Vagina (tissue), 2 donors: ENCODE measurements at regions of chr10 and their contacts with region 1.

Region 1: GRCh38 chr10:11611248-11612020 is at the start of gene USP6NL:
- DNase-seq: no peak
- H3K4me3 ChIP-seq: peak within 1 kb of the TSS; percentile 91 to 93
- H3K27ac ChIP-seq: peak within 1 kb of the TSS; percentile 88
- H3K4me1 ChIP-seq: peaks cover 28% of the 10 kb centered on the region
- H3K27me3 ChIP-seq: no peaks in the 10 kb centered on the region
- CTCF ChIP-seq: no peak
- POLR2A ChIP-seq: peak in 1 of 2 donors; percentile 39
- total RNA-seq, gene USP6NL: 23.3 TPM

Region 2: GRCh38 chr10:11335167-11335652 is 276.2 kb before region 1 on chr10:
- intact Hi-C with region 1: no loop called
- DNase-seq: no peak
- H3K4me3 ChIP-seq: no peak overlapping the region
- H3K27ac ChIP-seq: no peak overlapping the region
- H3K4me1 ChIP-seq: peaks cover 7% of the 10 kb centered on the region
- H3K27me3 ChIP-seq: no peaks in the 10 kb centered on the region
- CTCF ChIP-seq: no peak
- POLR2A ChIP-seq: no peak

Region 3: DNA sequence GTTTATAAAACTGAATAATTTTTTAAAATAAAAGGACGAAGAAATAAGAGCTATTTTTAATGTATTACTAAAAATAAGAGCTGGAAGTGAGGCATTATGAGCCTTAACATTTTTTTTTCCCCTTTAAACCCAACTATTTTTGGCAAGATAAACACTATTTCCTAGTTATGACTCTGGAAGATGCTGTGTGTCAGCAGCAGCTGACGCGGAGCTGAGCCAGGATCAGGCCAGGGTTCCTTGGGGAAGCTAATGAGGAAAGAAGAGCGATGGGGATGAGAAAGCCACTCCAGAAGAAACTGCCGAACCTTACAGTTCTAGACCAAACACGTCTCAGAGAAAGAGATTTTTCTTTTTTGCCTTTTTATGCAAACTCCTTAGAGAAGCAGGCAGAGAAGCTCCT is 85.9 kb before region 1 on chr10:
- intact Hi-C with region 1: loop called (anchors 10 kb)
- DNase-seq: no peak
- H3K4me3 ChIP-seq: no peak overlapping the region
- H3K27ac ChIP-seq: no peak overlapping the region
- H3K4me1 ChIP-seq: peaks cover 12% of the 10 kb centered on the region
- H3K27me3 ChIP-seq: no peaks in the 10 kb centered on the region
- CTCF ChIP-seq: no peak
- POLR2A ChIP-seq: no peak

Region 4: DNA sequence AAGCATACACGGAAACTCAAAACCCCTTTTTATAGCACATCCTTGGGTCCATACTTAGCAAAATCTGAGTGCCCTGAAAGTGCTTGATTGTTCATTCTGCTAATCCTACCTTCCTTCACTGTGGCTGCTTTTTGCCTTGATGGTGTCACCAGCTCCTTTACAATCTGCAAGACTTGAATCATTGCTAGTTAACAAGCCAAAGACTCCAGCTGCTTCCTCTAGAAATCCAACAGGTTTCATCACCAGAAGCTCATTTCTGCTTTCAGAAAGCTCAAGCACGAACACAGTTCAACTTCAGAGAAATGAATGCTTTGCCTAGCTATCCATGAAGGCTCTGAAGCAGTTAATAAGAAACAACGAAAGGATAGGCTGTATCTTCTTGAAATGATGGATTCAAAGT is 37.9 kb before region 1 on chr10:
- intact Hi-C with region 1: no loop called
- DNase-seq: no peak
- H3K4me3 ChIP-seq: no peak overlapping the region
- H3K27ac ChIP-seq: no peak overlapping the region
- H3K4me1 ChIP-seq: peaks cover 11% of the 10 kb centered on the region
- H3K27me3 ChIP-seq: no peaks in the 10 kb centered on the region
- CTCF ChIP-seq: no peak
- POLR2A ChIP-seq: no peak

Region 5: DNA sequence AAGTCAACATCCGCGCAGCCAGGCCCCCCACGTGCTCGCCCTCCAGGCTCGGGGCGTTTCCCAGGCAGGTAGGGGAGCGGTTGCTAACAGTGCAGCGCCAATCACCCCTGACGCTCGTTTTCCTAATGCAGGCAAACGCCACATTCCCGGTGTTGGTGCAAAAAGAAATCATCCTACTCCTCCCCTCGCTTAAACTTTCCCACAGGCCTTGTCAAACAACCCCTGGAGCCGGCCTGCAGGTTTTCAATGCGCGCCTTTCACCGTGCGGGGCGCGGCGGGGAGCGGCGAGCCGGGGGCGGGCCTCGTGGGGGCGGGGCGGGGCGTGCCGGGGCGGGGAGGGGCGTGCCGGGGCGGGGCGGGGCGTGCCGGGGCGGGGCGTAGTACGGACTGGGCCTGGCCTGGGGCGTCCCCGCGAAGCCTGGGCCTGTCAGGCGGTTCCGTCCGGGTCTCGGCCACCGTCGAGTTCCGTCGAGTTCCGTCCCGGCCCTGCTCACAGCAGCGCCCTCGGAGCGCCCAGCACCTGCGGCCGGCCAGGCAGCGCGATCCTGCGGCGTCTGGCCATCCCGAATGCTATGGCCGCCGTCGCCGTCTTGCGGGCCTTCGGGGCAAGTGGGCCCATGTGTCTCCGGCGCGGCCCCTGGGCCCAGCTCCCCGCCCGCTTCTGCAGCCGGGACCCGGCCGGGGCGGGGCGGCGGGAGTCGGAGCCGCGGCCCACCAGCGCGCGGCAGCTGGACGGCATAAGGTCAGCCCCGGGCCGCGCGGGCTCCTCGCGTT is 130.8 kb after region 1 on chr10 and contains the start of gene ECHDC3:
- intact Hi-C with region 1: loop called (anchors 5 kb)
- DNase-seq: no peak
- H3K4me3 ChIP-seq: peak within 1 kb of the TSS; percentile 53 to 77
- H3K27ac ChIP-seq: peak within 1 kb of the TSS; percentile 53
- H3K4me1 ChIP-seq: peaks cover 15% of the 10 kb centered on the region
- H3K27me3 ChIP-seq: no peaks in the 10 kb centered on the region
- CTCF ChIP-seq: no peak
- POLR2A ChIP-seq: peak in 1 of 2 donors; percentile 25
- total RNA-seq, gene ECHDC3: 44.2 TPM